A673 (cell line): ENCODE measurements at regions of chr20 and their contacts with region 1.

Region 1: GRCh38 chr20:36835453-36836198 is 40.3 kb upstream of the TLDC2 start:
- DNase-seq: peak; percentile 96
- H3K4me3 ChIP-seq: peak overlapping the region; percentile 16
- H3K27ac ChIP-seq: peak overlapping the region; percentile 79
- H3K4me1 ChIP-seq: peaks cover 22% of the 10 kb centered on the region
- H3K27me3 ChIP-seq: no peaks in the 10 kb centered on the region
- CTCF ChIP-seq: no peak

Region 2: DNA sequence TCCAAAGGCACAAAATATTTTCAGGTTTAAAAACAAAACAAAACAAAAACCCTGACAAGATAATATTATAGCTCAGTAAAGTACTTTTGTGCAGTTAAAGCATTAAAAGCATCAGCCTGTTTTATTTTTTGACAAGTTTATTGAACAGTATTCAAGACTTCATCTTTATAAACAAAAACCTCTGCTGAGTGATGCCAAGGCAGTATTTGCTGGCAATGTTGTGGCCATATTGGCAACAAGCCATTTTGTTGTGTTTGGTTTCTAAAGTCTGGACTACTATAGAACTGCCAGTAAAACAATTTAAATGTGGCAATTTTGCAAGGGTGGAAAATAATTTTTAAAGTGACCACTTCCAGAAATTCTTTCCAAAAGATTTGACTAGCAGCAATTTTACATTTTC is 1186.8 kb before region 1 on chr20:
- CTCF ChIA-PET with region 1: no interaction called
- POLR2A ChIA-PET with region 1: interaction called, 14 read pairs
- intact Hi-C with region 1: no loop called
- DNase-seq: no peak
- H3K4me3 ChIP-seq: no peak overlapping the region
- H3K27ac ChIP-seq: no peak overlapping the region
- H3K4me1 ChIP-seq: no peaks in the 10 kb centered on the region
- H3K27me3 ChIP-seq: no peaks in the 10 kb centered on the region
- CTCF ChIP-seq: no peak

Region 3: GRCh38 chr20:36808317-36809257 is 27.0 kb before region 1 on chr20:
- CTCF ChIA-PET with region 1: no interaction called
- POLR2A ChIA-PET with region 1: no interaction called
- intact Hi-C with region 1: no loop called
- DNase-seq: peak; percentile 64
- H3K4me3 ChIP-seq: no peak overlapping the region
- H3K27ac ChIP-seq: no peak overlapping the region
- H3K4me1 ChIP-seq: no peaks in the 10 kb centered on the region
- H3K27me3 ChIP-seq: no peaks in the 10 kb centered on the region
- CTCF ChIP-seq: peak; percentile 93

Region 4: DNA sequence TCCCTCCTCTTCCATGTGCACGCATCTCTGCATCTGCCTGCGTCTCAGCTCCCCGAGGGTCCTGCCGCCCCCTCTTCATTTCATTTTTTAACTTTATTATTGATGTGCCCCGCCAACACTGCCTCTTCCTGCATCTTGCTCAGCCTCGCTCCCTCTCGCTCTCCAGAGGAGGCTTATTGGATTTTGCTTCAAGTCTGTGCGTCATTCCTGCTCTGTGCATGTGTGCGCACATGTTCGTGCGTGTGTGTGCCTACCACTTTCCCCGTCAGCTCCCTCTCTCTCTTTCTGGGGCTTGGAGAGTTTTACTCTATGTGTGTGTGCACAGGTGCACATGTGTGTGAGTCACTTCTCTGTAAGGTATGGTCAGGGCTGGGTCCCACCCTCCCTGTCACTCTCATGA is 613.6 kb after region 1 on chr20:
- CTCF ChIA-PET with region 1: no interaction called
- POLR2A ChIA-PET with region 1: no interaction called
- intact Hi-C with region 1: no loop called
- DNase-seq: no peak
- H3K4me3 ChIP-seq: no peak overlapping the region
- H3K27ac ChIP-seq: no peak overlapping the region
- H3K4me1 ChIP-seq: no peaks in the 10 kb centered on the region
- H3K27me3 ChIP-seq: peaks cover 8% of the 10 kb centered on the region
- CTCF ChIP-seq: no peak